MCF 10A (cell line): ENCODE measurements at regions of chr17 and their contacts with region 1.

Region 1: DNA sequence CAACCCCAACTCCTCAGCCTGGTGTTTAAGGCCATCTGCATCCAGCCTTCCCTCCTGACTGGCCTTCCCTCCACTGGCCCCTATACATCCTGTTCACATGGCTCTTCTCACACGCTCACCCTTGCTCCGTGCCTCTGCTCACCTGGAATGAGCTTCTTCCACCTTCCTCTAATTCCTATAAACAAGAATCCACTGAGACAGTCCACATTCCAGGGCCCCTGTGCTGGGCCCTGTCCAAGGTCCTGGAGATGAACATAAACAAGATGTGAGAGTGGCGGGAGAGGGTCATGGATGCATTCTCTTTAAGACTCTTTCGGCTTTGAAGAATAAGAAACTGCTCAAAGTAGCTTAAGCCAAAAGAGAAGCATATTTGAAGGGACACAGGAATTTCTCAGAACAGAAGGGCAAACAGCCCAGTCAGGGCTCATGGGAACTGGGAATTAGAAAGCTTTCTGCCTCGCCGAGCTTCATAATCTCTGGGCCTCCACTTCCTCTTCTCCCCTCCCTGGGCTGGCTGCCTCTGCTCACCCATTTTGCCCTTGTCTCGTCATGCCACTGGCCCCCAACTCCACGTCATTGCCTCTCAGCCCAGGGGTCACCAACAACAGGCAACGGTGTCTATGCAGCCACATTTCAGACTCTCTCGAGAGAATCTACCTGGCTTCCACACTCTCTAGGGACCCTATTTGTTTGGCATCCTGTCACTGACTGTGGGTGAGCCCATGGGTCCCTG is 13.5 kb downstream of the SPPL2C start:
- DNase-seq: peak; percentile 54
- H3K4me3 Mint-ChIP-seq: no peak overlapping the region
- H3K27ac Mint-ChIP-seq: no peak overlapping the region
- H3K4me1 Mint-ChIP-seq: no peaks in the 10 kb centered on the region
- H3K27me3 Mint-ChIP-seq: peaks cover 61% of the 10 kb centered on the region
- CTCF ChIP-seq: no peak

Region 2: DNA sequence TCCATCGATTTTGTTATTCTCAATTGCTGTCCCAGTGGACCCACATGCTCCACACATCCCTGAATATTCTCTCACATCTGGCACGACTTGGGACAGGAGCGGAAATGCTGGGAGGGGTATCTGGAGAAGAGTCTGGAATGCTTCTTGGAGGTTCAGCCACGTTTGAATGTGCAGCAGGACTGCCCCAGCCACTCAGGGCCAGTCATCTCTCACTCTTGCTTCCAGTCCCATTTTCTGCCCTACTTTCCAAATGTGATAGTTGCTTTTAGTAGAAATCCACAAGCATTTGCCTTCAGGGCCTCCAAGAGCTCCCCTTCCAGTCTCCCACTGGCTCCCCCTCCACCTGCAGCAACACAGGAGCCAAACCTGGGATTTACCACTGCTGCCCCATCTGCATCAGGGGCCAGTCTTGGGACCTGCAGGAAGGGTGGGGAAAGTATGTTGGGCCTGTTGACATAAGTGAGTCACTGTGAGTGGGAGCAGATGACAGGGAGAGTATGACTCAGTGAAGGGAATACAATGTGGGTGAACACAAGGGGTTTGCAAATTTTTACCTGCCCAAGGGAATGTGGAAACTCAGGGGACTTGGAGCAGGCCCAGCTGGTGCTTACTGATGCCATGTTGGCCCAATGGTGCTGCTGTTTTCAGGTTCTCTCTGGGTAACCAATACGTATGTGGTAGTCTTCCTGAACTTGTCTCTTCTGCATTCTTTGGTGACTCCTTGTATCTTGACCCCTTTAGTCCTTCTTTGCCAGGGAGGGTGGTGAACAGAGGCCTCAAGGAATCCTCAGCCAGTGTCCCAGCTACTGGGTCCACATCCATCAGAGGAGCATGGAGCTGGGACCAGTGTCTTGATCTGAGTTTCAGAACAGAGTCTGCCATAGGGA is 152.8 kb before region 1 on chr17:
- CTCF ChIA-PET with region 1: no interaction called
- POLR2A ChIA-PET with region 1: no interaction called
- intact Hi-C with region 1: loop called (anchors 5 kb)
- DNase-seq: peak; percentile 95
- H3K4me3 Mint-ChIP-seq: no peak overlapping the region
- H3K27ac Mint-ChIP-seq: no peak overlapping the region
- H3K4me1 Mint-ChIP-seq: peaks cover 26% of the 10 kb centered on the region
- H3K27me3 Mint-ChIP-seq: no peaks in the 10 kb centered on the region
- CTCF ChIP-seq: no peak

Region 3: GRCh38 chr17:45936610-45937009 is 78.5 kb after region 1 on chr17:
- CTCF ChIA-PET with region 1: no interaction called
- POLR2A ChIA-PET with region 1: no interaction called
- intact Hi-C with region 1: no loop called
- DNase-seq: no peak
- H3K4me3 Mint-ChIP-seq: no peak overlapping the region
- H3K27ac Mint-ChIP-seq: no peak overlapping the region
- H3K4me1 Mint-ChIP-seq: no peaks in the 10 kb centered on the region
- H3K27me3 Mint-ChIP-seq: peaks cover 62% of the 10 kb centered on the region
- CTCF ChIP-seq: no peak